ENCODE measurements at regions of chr20 and their contacts with region 1.

Region 1: DNA sequence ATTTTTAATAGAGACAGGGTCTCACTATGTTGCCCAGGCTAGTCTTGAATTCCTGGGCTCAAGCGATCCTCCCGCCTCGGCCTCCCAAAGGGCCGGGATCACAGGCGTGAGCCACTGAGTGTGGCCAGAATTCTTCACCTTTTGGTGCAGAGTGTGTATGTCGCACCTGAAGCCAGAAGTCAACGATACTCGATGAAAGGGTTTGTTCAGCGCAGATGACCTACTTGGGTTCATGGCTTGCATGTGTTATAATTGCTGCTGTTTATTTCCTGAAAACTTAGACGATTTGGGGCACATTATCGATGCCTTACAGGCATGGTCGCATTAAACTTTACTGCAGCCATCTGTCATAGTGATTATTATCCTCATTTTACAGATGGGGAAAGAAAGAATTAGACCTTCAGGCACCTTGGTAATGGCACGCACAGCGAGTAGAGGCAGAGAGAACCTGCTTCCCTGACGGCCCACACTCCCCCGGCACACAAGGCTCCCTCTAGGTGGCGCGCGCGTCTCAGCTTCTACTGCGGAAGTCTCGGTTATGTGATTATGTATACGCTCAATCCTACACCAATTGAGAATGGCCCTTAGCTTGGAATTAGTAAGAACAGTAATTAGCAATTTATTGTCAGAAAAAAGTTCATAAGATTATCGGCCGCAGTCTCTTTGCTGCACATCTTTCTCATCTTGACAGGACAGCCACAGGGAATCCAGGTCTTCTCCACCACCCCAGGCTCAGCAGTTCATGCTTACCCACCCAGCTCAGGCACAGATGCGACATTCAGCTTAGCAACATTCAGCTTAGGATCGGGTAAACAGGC is 212.8 kb upstream of the PROKR2 start:
- DNase-seq: peak; percentile 92
- ATAC-seq: peak; percentile 96
- H3K4me3 Mint-ChIP-seq: peak overlapping the region; percentile 10
- H3K27ac Mint-ChIP-seq: peak overlapping the region; percentile 54
- H3K4me1 Mint-ChIP-seq: peaks cover 25% of the 10 kb centered on the region
- H3K27me3 Mint-ChIP-seq: peaks cover 13% of the 10 kb centered on the region

Region 2: GRCh38 chr20:5316188-5317158 is 213.1 kb before region 1 on chr20 and contains the start of gene PROKR2:
- CTCF ChIA-PET with region 1: no interaction called
- DNase-seq: no peak
- ATAC-seq: no peak
- H3K4me3 Mint-ChIP-seq: peak within 1 kb of the TSS; percentile 11
- H3K27ac Mint-ChIP-seq: no peak within 1 kb of the TSS
- H3K4me1 Mint-ChIP-seq: peaks cover 3% of the 10 kb centered on the region
- H3K27me3 Mint-ChIP-seq: peaks cover 65% of the 10 kb centered on the region
- total RNA-seq, gene PROKR2: not detected

Region 3: GRCh38 chr20:5550733-5551529 is 21.4 kb after region 1 on chr20:
- CTCF ChIA-PET with region 1: interaction called, 28 read pairs
- DNase-seq: no peak
- ATAC-seq: no peak
- H3K4me3 Mint-ChIP-seq: no peak overlapping the region
- H3K27ac Mint-ChIP-seq: no peak overlapping the region
- H3K4me1 Mint-ChIP-seq: peaks cover 6% of the 10 kb centered on the region
- H3K27me3 Mint-ChIP-seq: no peaks in the 10 kb centered on the region

Region 4: DNA sequence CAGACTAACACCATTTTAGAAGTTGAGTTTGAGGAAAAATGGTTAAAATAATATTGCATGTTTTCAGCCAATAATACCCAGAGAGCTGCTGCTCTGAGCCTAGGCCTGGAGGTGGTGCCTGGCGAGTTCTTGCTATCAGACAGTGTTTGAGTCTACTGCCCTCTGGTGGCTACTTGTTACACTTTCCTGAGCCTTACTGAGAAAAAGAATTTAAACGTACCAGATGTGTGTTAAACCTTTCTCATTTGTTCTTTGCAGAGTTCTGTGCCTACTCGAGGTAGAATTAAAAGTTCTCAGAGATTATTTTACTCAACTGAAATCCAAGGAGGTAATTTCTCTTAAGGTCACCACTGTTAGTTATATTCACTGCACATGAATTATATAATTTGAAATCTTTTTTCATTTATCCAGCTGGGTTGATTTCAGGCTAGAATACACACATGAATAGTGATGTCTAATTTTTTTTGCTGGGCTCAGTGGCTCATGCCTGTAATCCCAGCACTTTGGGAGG is 258.9 kb after region 1 on chr20:
- CTCF ChIA-PET with region 1: interaction called, 142 read pairs
- DNase-seq: peak; percentile 86
- ATAC-seq: peak; percentile 97
- H3K4me3 Mint-ChIP-seq: no peak overlapping the region
- H3K27ac Mint-ChIP-seq: no peak overlapping the region
- H3K4me1 Mint-ChIP-seq: peaks cover 3% of the 10 kb centered on the region
- H3K27me3 Mint-ChIP-seq: no peaks in the 10 kb centered on the region

Region 5: GRCh38 chr20:5844063-5844681 is 314.6 kb after region 1 on chr20:
- CTCF ChIA-PET with region 1: interaction called, 15 read pairs
- DNase-seq: peak; percentile 90
- ATAC-seq: peak; percentile 94
- H3K4me3 Mint-ChIP-seq: peak overlapping the region; percentile 4
- H3K27ac Mint-ChIP-seq: peak overlapping the region; percentile 53
- H3K4me1 Mint-ChIP-seq: peaks cover 49% of the 10 kb centered on the region
- H3K27me3 Mint-ChIP-seq: peaks cover 22% of the 10 kb centered on the region

Region 6: GRCh38 chr20:6074145-6074561 is 544.6 kb after region 1 on chr20:
- CTCF ChIA-PET with region 1: interaction called, 34 read pairs
- DNase-seq: no peak
- ATAC-seq: peak; percentile 33
- H3K4me3 Mint-ChIP-seq: no peak overlapping the region
- H3K27ac Mint-ChIP-seq: no peak overlapping the region
- H3K4me1 Mint-ChIP-seq: no peaks in the 10 kb centered on the region
- H3K27me3 Mint-ChIP-seq: peaks cover 19% of the 10 kb centered on the region

Measured in activated CD8-positive, alpha-beta memory T cell treated with anti-CD3 and anti-CD28 coated beads, Interleukin-2, amount 10 ng/mL, durations not matched to agents 7 days and 5 days (primary cell).